CD4-positive, alpha-beta memory T cell (primary cell): ENCODE measurements at regions of chr2 and their contacts with region 1.

Region 1: GRCh38 chr2:234425619-234426603 is 71.0 kb downstream of the ARL4C start:
- DNase-seq: peak; percentile 90 to 95 (median 91)
- H3K4me3 ChIP-seq: peak overlapping the region; percentile 19 to 33
- H3K4me3 Mint-ChIP-seq: peak overlapping the region; percentile 70 to 90 (median 82)
- H3K27ac ChIP-seq: peak overlapping the region; percentile 88
- H3K27ac Mint-ChIP-seq: peak overlapping the region; percentile 95 to 100 (median 100)
- H3K4me1 ChIP-seq: peaks cover 100% of the 10 kb centered on the region
- H3K4me1 Mint-ChIP-seq: peaks cover 66 to 96% (median 82%) of the 10 kb centered on the region in 4 donors
- H3K27me3 ChIP-seq: no peaks in the 10 kb centered on the region
- H3K27me3 Mint-ChIP-seq: no peaks in the 10 kb centered on the region

Region 2: GRCh38 chr2:233142355-233142897 is 1283.5 kb before region 1 on chr2:
- CTCF ChIA-PET with region 1: no interaction called
- POLR2A ChIA-PET with region 1: no interaction called
- intact Hi-C with region 1: no loop called
- DNase-seq: peak; percentile 35 to 49 (median 43)
- H3K4me3 ChIP-seq: no peak overlapping the region
- H3K4me3 Mint-ChIP-seq: peak overlapping the region in 7 of 8 donors; percentile 47 to 74 (median 66)
- H3K27ac ChIP-seq: no peak overlapping the region
- H3K27ac Mint-ChIP-seq: peak overlapping the region; percentile 59 to 90 (median 86)
- H3K4me1 ChIP-seq: peaks cover 25% of the 10 kb centered on the region
- H3K4me1 Mint-ChIP-seq: peaks cover 34 to 46% (median 42%) of the 10 kb centered on the region in 4 donors
- H3K27me3 ChIP-seq: no peaks in the 10 kb centered on the region
- H3K27me3 Mint-ChIP-seq: no peaks in the 10 kb centered on the region

Region 3: DNA sequence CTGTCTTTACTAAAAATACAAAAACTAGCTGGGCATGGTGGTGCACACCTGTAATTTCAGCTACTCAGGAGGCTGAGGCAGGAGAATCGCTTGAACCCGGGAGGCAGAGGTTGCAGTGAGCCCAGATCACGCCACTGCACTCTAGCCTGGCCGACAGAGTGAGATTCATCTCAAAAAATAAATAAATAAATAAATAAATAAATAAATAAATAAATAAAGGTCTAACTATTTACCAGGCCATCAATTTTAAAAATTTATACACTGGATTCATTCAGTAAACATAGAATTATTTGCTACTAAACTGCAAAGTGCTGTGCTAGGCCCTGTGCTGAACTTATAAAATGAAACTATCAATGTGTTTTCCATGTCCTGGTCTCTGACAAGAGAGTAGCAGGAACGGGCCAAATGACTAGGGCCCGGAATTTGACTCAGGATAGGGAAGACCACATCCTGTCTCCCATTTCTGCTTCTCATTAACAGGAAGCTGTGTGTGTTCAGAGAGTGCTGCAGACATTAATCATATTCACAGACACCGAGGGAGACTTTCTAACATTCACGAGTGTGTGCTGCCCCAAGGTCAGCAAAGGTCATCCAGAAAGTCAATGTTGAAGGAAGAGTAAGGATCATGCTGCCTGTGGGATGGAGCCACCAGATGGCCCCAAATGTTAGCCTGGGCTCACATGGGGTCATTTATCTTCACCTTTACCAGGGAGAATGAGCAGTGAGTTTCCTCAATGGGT is 279.7 kb before region 1 on chr2:
- CTCF ChIA-PET with region 1: no interaction called
- POLR2A ChIA-PET with region 1: no interaction called
- intact Hi-C with region 1: loop called (anchors 5 kb)
- DNase-seq: no peak
- H3K4me3 ChIP-seq: no peak overlapping the region
- H3K4me3 Mint-ChIP-seq: peak overlapping the region in 7 of 8 donors; percentile 4 to 77 (median 5)
- H3K27ac ChIP-seq: no peak overlapping the region
- H3K27ac Mint-ChIP-seq: peak overlapping the region in 6 of 7 donors; percentile 53 to 88 (median 84)
- H3K4me1 ChIP-seq: peaks cover 45% of the 10 kb centered on the region
- H3K4me1 Mint-ChIP-seq: peaks cover 40 to 80% (median 53%) of the 10 kb centered on the region in 4 donors
- H3K27me3 ChIP-seq: no peaks in the 10 kb centered on the region
- H3K27me3 Mint-ChIP-seq: no peaks in the 10 kb centered on the region

Region 4: DNA sequence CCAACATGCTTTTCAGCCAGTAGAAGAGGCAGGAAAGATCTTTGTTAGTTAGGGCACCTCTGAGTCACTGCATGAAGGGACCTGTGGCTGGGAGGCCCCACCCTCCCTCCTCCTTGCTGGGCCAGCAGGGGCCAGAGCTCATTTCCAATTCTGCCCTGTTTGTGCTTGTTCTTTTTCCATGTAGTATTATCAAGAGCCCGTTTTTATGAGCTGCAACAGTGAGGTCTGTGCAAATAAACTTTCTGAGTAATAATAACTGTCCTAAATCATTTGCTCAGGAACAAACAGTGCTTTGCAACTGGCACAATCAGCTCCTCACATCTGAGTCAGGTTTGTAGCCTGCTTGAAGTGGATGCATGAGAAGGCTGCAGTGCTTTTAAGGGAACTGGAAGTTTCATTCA is 57.0 kb before region 1 on chr2:
- CTCF ChIA-PET with region 1: interaction called, 7 read pairs
- POLR2A ChIA-PET with region 1: interaction called, 42 read pairs
- intact Hi-C with region 1: loop called (anchors 2 kb)
- DNase-seq: peak; percentile 31 to 70 (median 37)
- H3K4me3 ChIP-seq: no peak overlapping the region
- H3K4me3 Mint-ChIP-seq: peak overlapping the region in 4 of 8 donors; percentile 60 to 77 (median 61)
- H3K27ac ChIP-seq: peak overlapping the region; percentile 33
- H3K27ac Mint-ChIP-seq: peak overlapping the region; percentile 82 to 96 (median 93)
- H3K4me1 ChIP-seq: peaks cover 78% of the 10 kb centered on the region
- H3K4me1 Mint-ChIP-seq: peaks cover 50 to 79% (median 64%) of the 10 kb centered on the region in 4 donors
- H3K27me3 ChIP-seq: no peaks in the 10 kb centered on the region
- H3K27me3 Mint-ChIP-seq: no peaks in the 10 kb centered on the region

Region 5: DNA sequence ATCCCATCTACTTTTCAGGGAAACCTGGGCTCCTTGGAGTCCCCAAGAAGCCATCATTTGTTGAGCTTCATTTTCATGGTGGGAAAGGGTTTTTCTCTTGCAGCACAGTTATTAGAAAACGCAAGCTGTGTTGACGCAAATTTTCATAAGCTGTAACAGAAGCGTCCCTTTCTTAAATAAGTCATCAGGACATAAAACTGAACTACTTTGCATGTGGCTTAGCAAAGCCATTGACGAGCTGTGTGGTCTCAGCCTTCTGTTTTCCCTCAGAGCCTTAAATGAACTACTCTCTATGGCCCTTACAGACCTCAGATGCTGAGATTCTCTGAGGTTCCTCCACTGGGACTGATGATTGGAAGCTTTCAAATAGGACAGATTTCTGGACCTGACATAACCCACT is 14.1 kb before region 1 on chr2:
- CTCF ChIA-PET with region 1: interaction called, 18 read pairs
- POLR2A ChIA-PET with region 1: interaction called, 15 read pairs
- intact Hi-C with region 1: no loop called
- DNase-seq: no peak
- H3K4me3 ChIP-seq: no peak overlapping the region
- H3K4me3 Mint-ChIP-seq: no peak overlapping the region
- H3K27ac ChIP-seq: no peak overlapping the region
- H3K27ac Mint-ChIP-seq: peak overlapping the region in 2 of 7 donors; percentile 21 to 81
- H3K4me1 ChIP-seq: no peaks in the 10 kb centered on the region
- H3K4me1 Mint-ChIP-seq: peaks cover 19 to 43% (median 29%) of the 10 kb centered on the region in 4 donors
- H3K27me3 ChIP-seq: no peaks in the 10 kb centered on the region
- H3K27me3 Mint-ChIP-seq: no peaks in the 10 kb centered on the region

Region 6: GRCh38 chr2:234451852-234452625 is 26.1 kb after region 1 on chr2:
- CTCF ChIA-PET with region 1: interaction called, 13 read pairs
- POLR2A ChIA-PET with region 1: interaction called, 743 read pairs
- intact Hi-C with region 1: loop called (anchors 1 kb)
- DNase-seq: peak in 4 of 5 donors; percentile 38 to 65 (median 55)
- H3K4me3 ChIP-seq: peak overlapping the region; percentile 3 to 83
- H3K4me3 Mint-ChIP-seq: peak overlapping the region; percentile 64 to 97 (median 88)
- H3K27ac ChIP-seq: peak overlapping the region; percentile 90
- H3K27ac Mint-ChIP-seq: peak overlapping the region; percentile 72 to 99 (median 94)
- H3K4me1 ChIP-seq: peaks cover 91% of the 10 kb centered on the region
- H3K4me1 Mint-ChIP-seq: peaks cover 58 to 93% (median 74%) of the 10 kb centered on the region in 4 donors
- H3K27me3 ChIP-seq: no peaks in the 10 kb centered on the region
- H3K27me3 Mint-ChIP-seq: no peaks in the 10 kb centered on the region

Region 7: GRCh38 chr2:234483568-234484251 is 57.8 kb after region 1 on chr2:
- CTCF ChIA-PET with region 1: interaction called, 20 read pairs
- POLR2A ChIA-PET with region 1: interaction called, 103 read pairs
- intact Hi-C with region 1: no loop called
- DNase-seq: peak; percentile 86 to 95 (median 88)
- H3K4me3 ChIP-seq: peak overlapping the region in 1 of 2 donors; percentile 5
- H3K4me3 Mint-ChIP-seq: peak overlapping the region; percentile 52 to 87 (median 76)
- H3K27ac ChIP-seq: peak overlapping the region; percentile 98
- H3K27ac Mint-ChIP-seq: peak overlapping the region; percentile 97 to 99 (median 98)
- H3K4me1 ChIP-seq: peaks cover 81% of the 10 kb centered on the region
- H3K4me1 Mint-ChIP-seq: peaks cover 64 to 94% (median 78%) of the 10 kb centered on the region in 4 donors
- H3K27me3 ChIP-seq: no peaks in the 10 kb centered on the region
- H3K27me3 Mint-ChIP-seq: no peaks in the 10 kb centered on the region

Region 8: DNA sequence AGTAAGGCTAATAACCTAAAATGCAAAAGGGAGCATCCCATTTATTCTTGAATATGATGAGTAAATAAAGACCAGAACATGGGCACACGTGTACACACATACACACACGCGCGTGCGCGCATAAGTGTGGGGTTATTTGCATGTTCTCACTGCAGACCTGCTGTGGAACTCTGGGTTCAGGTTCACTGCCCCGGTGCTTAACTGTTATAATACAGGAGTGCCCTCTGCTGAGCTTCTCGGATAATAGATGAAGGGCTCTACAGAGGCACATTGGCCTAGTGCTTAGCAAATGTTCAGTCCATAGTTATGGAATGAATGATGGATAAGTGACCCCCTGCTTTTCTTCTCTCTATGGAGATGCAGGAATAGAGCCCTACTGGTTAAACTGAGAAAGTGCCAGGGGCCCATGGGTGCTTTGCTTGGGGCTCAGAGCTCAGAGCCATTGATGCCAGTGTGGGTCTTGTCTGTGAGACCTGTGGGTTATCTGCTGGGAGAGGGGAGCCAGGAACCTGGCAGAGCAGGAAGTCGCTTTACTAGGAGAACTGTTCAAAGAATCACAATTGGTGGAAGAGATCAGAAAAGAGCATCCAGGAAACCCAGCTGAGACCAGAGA is 74.6 kb after region 1 on chr2:
- CTCF ChIA-PET with region 1: interaction called, 14 read pairs
- POLR2A ChIA-PET with region 1: interaction called, 266 read pairs
- intact Hi-C with region 1: loop called (anchors 1 kb)
- DNase-seq: peak; percentile 73 to 85 (median 78)
- H3K4me3 ChIP-seq: peak overlapping the region in 1 of 2 donors; percentile 9
- H3K4me3 Mint-ChIP-seq: peak overlapping the region; percentile 57 to 91 (median 83)
- H3K27ac ChIP-seq: peak overlapping the region; percentile 77
- H3K27ac Mint-ChIP-seq: peak overlapping the region; percentile 81 to 97 (median 94)
- H3K4me1 ChIP-seq: peaks cover 32% of the 10 kb centered on the region
- H3K4me1 Mint-ChIP-seq: peaks cover 26 to 41% (median 30%) of the 10 kb centered on the region in 4 donors
- H3K27me3 ChIP-seq: no peaks in the 10 kb centered on the region
- H3K27me3 Mint-ChIP-seq: no peaks in the 10 kb centered on the region

Region 9: DNA sequence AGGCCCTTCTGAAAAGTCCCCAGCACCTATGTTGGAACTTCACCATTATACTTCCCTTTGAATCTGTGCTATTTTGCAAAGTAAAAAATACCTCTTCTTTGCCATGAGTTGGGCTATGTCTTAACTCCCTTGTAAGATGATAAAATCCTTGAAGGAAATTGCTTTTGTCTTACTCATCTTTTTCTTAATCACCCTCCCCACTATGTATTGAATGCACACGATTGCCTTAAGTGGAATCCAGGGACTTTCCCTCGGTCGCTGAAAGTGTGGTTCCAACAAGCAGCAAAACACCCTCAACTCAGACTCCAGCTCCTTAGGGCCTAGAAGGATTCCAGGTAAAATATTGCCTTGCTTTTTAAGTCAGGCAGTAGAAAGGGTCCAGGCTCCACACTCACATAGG is 244.1 kb after region 1 on chr2:
- CTCF ChIA-PET with region 1: no interaction called
- POLR2A ChIA-PET with region 1: no interaction called
- intact Hi-C with region 1: no loop called
- DNase-seq: no peak
- H3K4me3 ChIP-seq: no peak overlapping the region
- H3K4me3 Mint-ChIP-seq: no peak overlapping the region
- H3K27ac ChIP-seq: no peak overlapping the region
- H3K27ac Mint-ChIP-seq: no peak overlapping the region
- H3K4me1 ChIP-seq: no peaks in the 10 kb centered on the region
- H3K4me1 Mint-ChIP-seq: no peaks in the 10 kb centered on the region
- H3K27me3 ChIP-seq: no peaks in the 10 kb centered on the region
- H3K27me3 Mint-ChIP-seq: peaks cover 19% of the 10 kb centered on the region in 2 donors